ENCODE measurements at regions of chr6 and their contacts with region 1.

Region 1: DNA sequence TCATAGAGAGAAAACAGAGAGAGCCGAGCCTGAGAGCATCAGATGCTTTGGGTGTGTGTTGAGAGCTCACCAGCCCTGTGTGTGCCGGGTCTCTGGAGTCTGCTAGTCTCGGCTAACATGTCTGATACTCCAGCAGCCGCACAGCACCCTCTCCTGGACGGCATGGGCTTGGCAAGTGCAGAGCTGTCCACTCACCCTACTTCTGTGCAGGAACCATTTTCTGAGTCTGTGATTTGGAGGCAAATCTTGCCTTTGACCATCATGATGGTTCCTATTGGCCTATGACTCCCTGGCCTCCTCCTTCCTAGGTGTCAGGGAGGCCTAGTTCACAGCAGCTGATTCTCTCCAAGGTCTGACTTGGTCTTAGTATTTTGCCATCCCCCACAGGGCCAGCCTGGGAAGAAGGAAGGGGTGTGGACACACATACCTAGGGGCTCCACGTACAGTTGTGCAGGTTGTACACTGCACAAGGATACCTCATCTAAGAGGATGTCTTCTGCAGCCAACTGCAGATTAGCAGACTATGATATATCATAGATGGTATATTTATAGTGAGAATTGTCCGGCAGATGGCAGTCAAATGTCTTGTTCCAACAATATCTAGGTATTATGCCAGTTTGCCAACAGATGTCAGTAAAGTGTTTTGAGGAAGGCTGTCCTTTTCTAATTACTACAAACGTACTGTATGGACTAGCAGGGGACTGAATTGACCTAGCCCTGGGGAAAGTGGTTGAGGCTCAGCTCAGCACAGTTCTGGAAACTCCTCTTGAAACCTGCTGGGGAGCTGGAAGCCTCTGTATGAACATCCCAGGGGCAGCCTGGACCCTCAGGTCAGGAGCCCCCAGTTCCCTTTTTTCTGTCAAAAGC is 13.0 kb downstream of the FGD2 start:
- DNase-seq: peak; percentile 87 to 90
- H3K4me3 ChIP-seq: no peak overlapping the region
- H3K4me3 Mint-ChIP-seq: no peak overlapping the region
- H3K27ac Mint-ChIP-seq: no peak overlapping the region
- H3K4me1 ChIP-seq: peaks cover 15% of the 10 kb centered on the region
- H3K4me1 Mint-ChIP-seq: peaks cover 24% of the 10 kb centered on the region
- H3K27me3 ChIP-seq: no peaks in the 10 kb centered on the region
- H3K27me3 Mint-ChIP-seq: no peaks in the 10 kb centered on the region
- CTCF ChIP-seq: peak; percentile 85 to 96

Region 2: GRCh38 chr6:36885461-36886401 is 132.7 kb before region 1 on chr6 and contains the start of gene C6orf89:
- CTCF ChIA-PET with region 1: interaction called, 39 read pairs
- POLR2A ChIA-PET with region 1: interaction called, 4 read pairs
- intact Hi-C with region 1: loop called (anchors 1 kb)
- DNase-seq: peak; percentile 94 to 97
- H3K4me3 ChIP-seq: peak within 1 kb of the TSS; percentile 80
- H3K4me3 Mint-ChIP-seq: peak within 1 kb of the TSS; percentile 83
- H3K27ac Mint-ChIP-seq: peak within 1 kb of the TSS; percentile 80
- H3K4me1 ChIP-seq: peaks cover 4% of the 10 kb centered on the region; the same call in 1 of the 2 replicates
- H3K4me1 Mint-ChIP-seq: peaks cover 16% of the 10 kb centered on the region
- H3K27me3 ChIP-seq: no peaks in the 10 kb centered on the region
- H3K27me3 Mint-ChIP-seq: no peaks in the 10 kb centered on the region
- CTCF ChIP-seq: peak; percentile 84 to 88
- total RNA-seq, gene C6orf89: 24.4 and 24.5 TPM in 2 replicates

Region 3: GRCh38 chr6:36979347-36979742 is 39.1 kb before region 1 on chr6:
- CTCF ChIA-PET with region 1: interaction called, 8 read pairs
- POLR2A ChIA-PET with region 1: no interaction called
- intact Hi-C with region 1: loop called (anchors 5 kb)
- DNase-seq: no peak
- H3K4me3 ChIP-seq: no peak overlapping the region
- H3K4me3 Mint-ChIP-seq: no peak overlapping the region
- H3K27ac Mint-ChIP-seq: no peak overlapping the region
- H3K4me1 ChIP-seq: peaks cover 1% of the 10 kb centered on the region; the same call in 1 of the 2 replicates
- H3K4me1 Mint-ChIP-seq: no peaks in the 10 kb centered on the region
- H3K27me3 ChIP-seq: no peaks in the 10 kb centered on the region
- H3K27me3 Mint-ChIP-seq: no peaks in the 10 kb centered on the region
- CTCF ChIP-seq: no peak

Region 4: GRCh38 chr6:37051138-37052026 is 33.0 kb after region 1 on chr6:
- CTCF ChIA-PET with region 1: interaction called, 12 read pairs
- POLR2A ChIA-PET with region 1: no interaction called
- intact Hi-C with region 1: no loop called
- DNase-seq: peak; percentile 81 to 91
- H3K4me3 ChIP-seq: no peak overlapping the region
- H3K4me3 Mint-ChIP-seq: no peak overlapping the region
- H3K27ac Mint-ChIP-seq: no peak overlapping the region
- H3K4me1 ChIP-seq: peaks cover 14% of the 10 kb centered on the region
- H3K4me1 Mint-ChIP-seq: peaks cover 7% of the 10 kb centered on the region
- H3K27me3 ChIP-seq: no peaks in the 10 kb centered on the region
- H3K27me3 Mint-ChIP-seq: no peaks in the 10 kb centered on the region
- CTCF ChIP-seq: peak; percentile 86 to 93

Region 5: GRCh38 chr6:37175332-37176267 is 157.2 kb after region 1 on chr6:
- CTCF ChIA-PET with region 1: interaction called, 12 read pairs
- POLR2A ChIA-PET with region 1: interaction called, 3 read pairs
- intact Hi-C with region 1: loop called (anchors 1 kb)
- DNase-seq: no peak
- H3K4me3 ChIP-seq: no peak overlapping the region
- H3K4me3 Mint-ChIP-seq: no peak overlapping the region
- H3K27ac Mint-ChIP-seq: no peak overlapping the region
- H3K4me1 ChIP-seq: no peaks in the 10 kb centered on the region; the same call in 1 of the 2 replicates
- H3K4me1 Mint-ChIP-seq: peaks cover 6% of the 10 kb centered on the region
- H3K27me3 ChIP-seq: no peaks in the 10 kb centered on the region
- H3K27me3 Mint-ChIP-seq: no peaks in the 10 kb centered on the region
- CTCF ChIP-seq: no peak

Region 6: DNA sequence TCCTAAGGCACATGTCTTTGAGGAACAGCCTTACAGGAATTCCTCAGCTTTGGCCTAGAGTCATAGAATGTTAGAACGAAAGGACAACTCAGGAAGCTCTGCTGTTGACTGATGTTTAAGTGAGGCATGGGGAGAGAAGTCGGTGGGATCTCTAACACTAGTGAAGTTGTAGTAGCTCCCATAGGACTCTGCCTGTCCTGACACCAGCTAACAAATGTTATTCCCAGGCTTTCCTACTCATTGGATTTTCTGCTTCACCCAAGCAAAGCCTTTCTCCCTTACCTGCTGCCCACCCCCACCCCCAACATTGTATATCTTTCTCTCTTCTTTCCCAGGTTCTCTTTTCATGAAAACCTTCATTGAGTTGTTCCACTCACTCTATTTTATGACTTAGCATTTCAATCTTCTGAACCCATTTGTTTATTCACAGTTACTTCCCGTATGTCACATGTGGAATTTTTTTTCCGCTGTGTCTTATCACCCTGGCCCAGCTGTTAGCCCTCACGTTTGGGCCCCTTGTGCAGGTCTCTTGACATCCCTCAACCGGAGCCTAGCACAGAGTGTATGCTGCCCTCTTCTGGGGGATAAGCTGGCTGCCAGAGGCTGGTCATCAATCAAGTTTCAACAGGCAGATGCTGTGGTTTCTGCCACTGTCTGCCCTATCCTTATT is 296.2 kb after region 1 on chr6:
- CTCF ChIA-PET with region 1: no interaction called
- POLR2A ChIA-PET with region 1: no interaction called
- intact Hi-C with region 1: loop called (anchors 1 kb)
- DNase-seq: peak; percentile 54 to 55
- H3K4me3 ChIP-seq: no peak overlapping the region
- H3K4me3 Mint-ChIP-seq: no peak overlapping the region
- H3K27ac Mint-ChIP-seq: no peak overlapping the region
- H3K4me1 ChIP-seq: no peaks in the 10 kb centered on the region
- H3K4me1 Mint-ChIP-seq: no peaks in the 10 kb centered on the region
- H3K27me3 ChIP-seq: no peaks in the 10 kb centered on the region
- H3K27me3 Mint-ChIP-seq: no peaks in the 10 kb centered on the region
- CTCF ChIP-seq: peak; percentile 42 to 75

Measured in Caco-2 (cell line).